Heart right ventricle (tissue), 16 donors: ENCODE measurements at regions of chr4 and their contacts with region 1.

Region 1: GRCh38 chr4:148434075-148434773 is 8.0 kb downstream of the NR3C2 start:
- DNase-seq: no peak
- ATAC-seq: no peak
- H3K4me3 ChIP-seq: no peak overlapping the region
- H3K27ac ChIP-seq: no peak overlapping the region
- H3K4me1 ChIP-seq: peaks cover 0 to 98% (median 58%) of the 10 kb centered on the region in 9 donors
- H3K27me3 ChIP-seq: peaks cover 0 to under 1% (median 0%) of the 10 kb centered on the region in 7 donors
- CTCF ChIP-seq: no peak

Region 2: GRCh38 chr4:148299337-148299736 is 134.9 kb before region 1 on chr4:
- intact Hi-C with region 1: loop called in 1 of 10 experiments (anchors 5 kb)
- DNase-seq: no peak
- ATAC-seq: peak in 2 of 8 donors; percentile 46 to 50
- H3K4me3 ChIP-seq: no peak overlapping the region
- H3K27ac ChIP-seq: no peak overlapping the region
- H3K4me1 ChIP-seq: peaks cover 0 to 3% (median 0%) of the 10 kb centered on the region in 9 donors
- H3K27me3 ChIP-seq: no peaks in the 10 kb centered on the region
- CTCF ChIP-seq: no peak

Region 3: GRCh38 chr4:148396986-148397673 is 37.1 kb before region 1 on chr4:
- intact Hi-C with region 1: loop called in 1 of 10 experiments (anchors 5 kb)
- DNase-seq: no peak
- ATAC-seq: peak in 3 of 8 donors; percentile 10 to 29 (median 11)
- H3K4me3 ChIP-seq: no peak overlapping the region
- H3K27ac ChIP-seq: peak overlapping the region in 1 of 10 donors; percentile 9
- H3K4me1 ChIP-seq: peaks cover 0 to 40% (median 18%) of the 10 kb centered on the region in 9 donors
- H3K27me3 ChIP-seq: no peaks in the 10 kb centered on the region
- CTCF ChIP-seq: no peak

Region 4: DNA sequence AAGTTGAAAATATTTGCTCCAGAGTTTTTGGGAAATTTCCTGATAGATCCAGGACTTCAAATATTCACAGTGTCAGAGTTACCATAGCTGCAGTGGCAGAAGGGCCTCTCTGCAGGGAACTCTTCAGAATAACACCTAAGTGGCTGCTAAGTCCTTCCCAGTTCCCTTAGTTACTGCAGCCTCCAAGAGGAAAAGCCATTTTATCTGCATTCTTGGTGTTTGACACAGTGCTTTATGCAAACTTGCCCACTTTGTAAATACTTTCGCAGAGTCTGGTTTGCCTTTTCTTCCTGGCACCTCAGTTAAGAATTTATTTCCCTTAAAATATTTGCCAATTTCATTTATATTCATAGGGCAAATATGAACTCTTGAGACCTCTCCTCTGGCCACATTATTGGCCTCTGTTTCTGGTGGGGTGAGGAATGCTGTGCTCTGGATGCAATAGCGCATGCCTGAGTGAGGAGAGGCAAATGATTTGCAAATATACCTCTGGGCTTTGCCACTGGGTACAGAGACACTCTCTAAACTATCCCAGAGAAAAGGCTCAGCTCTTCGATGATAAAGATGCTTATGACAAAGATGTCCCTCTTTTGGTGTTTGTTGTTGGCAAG is 574.3 kb after region 1 on chr4:
- intact Hi-C with region 1: no loop called
- DNase-seq: no peak
- ATAC-seq: no peak
- H3K4me3 ChIP-seq: no peak overlapping the region
- H3K27ac ChIP-seq: no peak overlapping the region
- H3K4me1 ChIP-seq: no peaks in the 10 kb centered on the region
- H3K27me3 ChIP-seq: no peaks in the 10 kb centered on the region
- CTCF ChIP-seq: no peak